ENCODE measurements at regions of chr18 and their contacts with region 1.

Region 1: DNA sequence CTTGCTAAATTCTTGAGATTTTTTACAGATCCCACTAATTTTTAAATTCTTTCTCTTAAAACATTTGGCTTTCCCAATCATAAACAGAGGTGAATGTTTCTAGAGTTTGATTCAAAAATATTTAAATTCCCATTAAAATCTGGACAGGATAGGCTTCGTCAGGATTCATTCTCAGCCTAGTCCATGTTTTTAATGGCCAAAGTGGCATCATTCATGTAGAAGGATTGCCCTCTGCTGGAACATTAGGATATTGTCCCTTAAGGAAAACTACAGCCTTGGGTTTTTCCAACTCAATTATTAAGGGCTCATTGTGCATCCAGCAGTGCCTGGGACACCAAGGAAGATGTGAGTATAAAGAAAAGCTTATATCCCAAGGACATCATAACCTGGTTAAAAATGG is 71.7 kb downstream of the TPGS2 start:
- DNase-seq: no peak

Region 2: DNA sequence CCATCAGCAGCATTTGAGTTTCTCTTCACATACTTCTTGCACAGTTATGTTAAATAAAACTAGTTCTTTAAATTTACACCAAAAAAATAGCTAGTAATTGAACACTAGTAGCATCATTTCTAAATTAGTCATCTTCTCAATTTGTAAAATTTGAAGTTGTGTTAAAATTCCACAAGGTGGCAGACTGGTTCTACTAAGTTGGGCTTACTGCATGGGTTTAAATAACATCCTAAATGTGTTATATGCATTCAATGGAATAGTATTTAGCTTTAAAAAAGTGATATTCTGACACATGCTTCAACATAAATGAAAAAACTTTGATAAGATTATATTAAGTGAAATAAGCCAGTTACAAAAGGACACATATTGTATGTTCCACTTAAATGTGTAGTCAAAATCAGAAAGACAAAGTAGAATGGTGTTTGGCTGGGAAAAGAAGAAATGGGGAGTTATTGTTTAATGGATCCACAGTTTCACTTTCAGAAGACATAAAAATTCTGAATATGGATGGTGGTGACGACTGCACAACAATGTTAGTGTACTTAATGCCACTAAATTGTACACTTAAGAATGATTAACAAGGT is 661.1 kb before region 1 on chr18:
- intact Hi-C with region 1: loop called (anchors 5 kb)
- DNase-seq: no peak

Region 3: GRCh38 chr18:36284671-36285295 is 472.3 kb before region 1 on chr18:
- intact Hi-C with region 1: loop called (anchors 5 kb)
- DNase-seq: peak in 3 of 10 donors; percentile 31 to 41 (median 40)

Region 4: GRCh38 chr18:36296650-36297416 is 460.2 kb before region 1 on chr18:
- intact Hi-C with region 1: loop called (anchors 5 kb)
- DNase-seq: peak; percentile 68 to 96 (median 84)

Region 5: GRCh38 chr18:36493349-36494159 is 263.5 kb before region 1 on chr18:
- intact Hi-C with region 1: no loop called
- DNase-seq: no peak

Region 6: GRCh38 chr18:36650906-36651305 is 106.2 kb before region 1 on chr18:
- intact Hi-C with region 1: no loop called
- DNase-seq: no peak

Region 7: DNA sequence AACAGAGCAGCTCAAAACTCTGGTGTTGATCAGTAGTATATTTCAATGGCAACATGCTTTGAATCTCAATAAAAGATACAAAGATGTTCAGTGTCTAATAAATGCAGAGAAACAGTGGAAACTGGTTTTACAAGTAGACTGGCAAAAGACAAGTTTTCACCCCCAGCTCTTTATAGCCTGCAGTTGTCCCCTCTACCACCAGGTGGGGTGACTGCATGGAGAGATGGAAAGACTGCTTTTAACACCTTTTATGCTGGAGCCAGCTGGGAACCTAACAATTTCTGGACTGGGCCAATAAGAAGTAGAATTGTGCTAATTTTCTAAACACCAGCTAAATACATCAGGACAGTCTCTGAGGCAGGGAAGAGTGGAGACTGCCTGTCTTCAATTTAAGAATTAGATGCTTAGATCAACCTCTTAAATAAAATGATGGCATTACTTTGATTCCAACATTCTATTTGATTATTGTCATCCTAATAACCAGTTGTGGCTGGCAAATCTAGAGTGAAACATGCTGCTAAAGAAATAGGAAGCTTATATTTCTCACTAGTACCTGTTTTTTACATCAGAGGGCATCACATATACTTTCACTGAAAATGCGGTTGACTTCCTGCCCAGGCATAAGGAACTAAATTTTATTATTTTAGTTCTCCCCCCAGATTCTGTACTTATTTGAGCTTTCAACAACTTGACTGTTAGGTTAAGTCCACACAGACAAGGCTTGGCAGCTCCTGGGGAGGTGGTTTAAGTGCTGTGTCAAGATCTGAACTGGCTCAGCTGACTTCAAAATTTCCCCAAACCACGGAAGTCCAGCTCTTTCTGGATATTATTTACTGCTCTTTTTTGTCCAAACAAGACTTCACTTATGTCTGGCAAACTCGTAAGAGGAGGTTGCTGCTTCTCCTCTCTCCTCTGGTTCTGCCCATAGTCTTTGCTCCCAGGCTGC is 68.8 kb before region 1 on chr18:
- intact Hi-C with region 1: loop called (anchors 1 kb)
- DNase-seq: peak in 7 of 10 donors; percentile 55 to 87 (median 62)

Region 8: DNA sequence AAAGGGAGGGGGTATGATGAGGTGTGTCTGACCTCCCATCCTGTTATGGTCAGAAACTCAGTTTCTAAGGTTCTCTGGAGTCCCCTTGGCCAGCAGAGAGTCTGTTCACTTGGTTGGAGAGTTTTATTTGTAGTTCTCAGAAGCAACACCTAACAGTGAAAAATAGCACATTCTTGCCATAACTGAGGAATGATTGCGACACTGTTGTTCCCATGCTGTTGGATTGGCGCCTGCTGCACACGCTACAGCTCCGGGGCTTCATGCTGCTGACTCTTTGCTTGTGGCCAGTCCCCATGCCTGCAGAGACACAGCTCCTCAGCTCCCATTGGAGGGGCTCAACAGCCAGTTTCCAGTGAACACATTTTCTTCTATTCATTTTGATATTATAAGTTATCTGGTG is 29.6 kb after region 1 on chr18:
- intact Hi-C with region 1: no loop called
- DNase-seq: peak in 4 of 10 donors; percentile 31 to 86 (median 43)